ENCODE measurements at regions of chr16 and their contacts with region 1.

Region 1: GRCh38 chr16:30984669-30985400 is at the start of gene HSD3B7:
- DNase-seq: no peak
- ATAC-seq: peak; percentile 95
- H3K4me3 ChIP-seq: no peak within 1 kb of the TSS
- H3K27ac ChIP-seq: no peak within 1 kb of the TSS
- H3K4me1 ChIP-seq: no peaks in the 10 kb centered on the region
- H3K27me3 ChIP-seq: no peaks in the 10 kb centered on the region
- CTCF ChIP-seq: peak; percentile 85 to 97 (median 92)
- EP300 ChIP-seq: no peak
- POLR2A ChIP-seq: peak; percentile 55
- RAD21 ChIP-seq: peak; percentile 89
- polyA plus RNA-seq, gene HSD3B7: 0.18 to 0.40 TPM

Region 2: DNA sequence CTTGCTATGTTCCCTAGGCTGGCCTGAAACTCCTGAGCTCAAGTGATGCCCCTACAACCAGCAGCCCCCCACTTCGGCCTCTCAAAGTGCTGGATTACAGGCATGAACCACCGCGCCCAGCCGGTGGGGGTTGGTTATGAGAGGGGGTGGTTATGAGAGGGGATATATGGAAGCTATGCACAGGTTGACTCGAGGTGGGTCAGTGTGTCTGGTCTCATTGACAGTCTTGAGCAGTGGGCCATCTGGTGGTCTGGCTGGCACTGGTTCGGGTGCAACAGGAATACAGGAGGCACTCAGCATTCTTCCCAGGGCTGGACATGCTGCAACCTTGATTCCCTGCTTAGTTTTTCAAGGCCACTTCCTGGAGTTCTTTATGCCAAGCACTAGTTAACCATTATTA is 31.2 kb after region 1 on chr16:
- CTCF ChIA-PET with region 1: interaction called, 11 read pairs
- POLR2A ChIA-PET with region 1: no interaction called
- RAD21 ChIA-PET with region 1: no interaction called
- SMC1A ChIA-PET with region 1: interaction called, 4 read pairs
- in situ Hi-C with region 1: no loop called
- intact Hi-C with region 1: no loop called
- DNase-seq: no peak
- ATAC-seq: peak; percentile 41; the same call in 2 of the 3 replicates
- H3K4me3 ChIP-seq: no peak overlapping the region
- H3K27ac ChIP-seq: no peak overlapping the region
- H3K4me1 ChIP-seq: no peaks in the 10 kb centered on the region
- H3K27me3 ChIP-seq: peaks cover under 1 to 1% of the 10 kb centered on the region in 2 experiments; a peak in 3 of 4 replicates
- CTCF ChIP-seq: peak in 2 of 3 experiments; percentile 4 to 24; a peak in 3 of 6 replicates
- EP300 ChIP-seq: no peak
- POLR2A ChIP-seq: no peak
- RAD21 ChIP-seq: no peak

Region 3: GRCh38 chr16:31073968-31074813 is 89.4 kb after region 1 on chr16 and contains the starts of genes ZNF646 and ZNF668:
- CTCF ChIA-PET with region 1: interaction called, 13 read pairs
- POLR2A ChIA-PET with region 1: no interaction called
- RAD21 ChIA-PET with region 1: interaction called, 5 read pairs
- SMC1A ChIA-PET with region 1: interaction called, 10 read pairs
- in situ Hi-C with region 1: no loop called
- intact Hi-C with region 1: loop called (anchors 10 kb)
- DNase-seq: peak; percentile 96
- ATAC-seq: peak; percentile 84
- H3K4me3 ChIP-seq: peak within 1 kb of the TSS; percentile 86
- H3K27ac ChIP-seq: peak within 1 kb of the TSS; percentile 89
- H3K4me1 ChIP-seq: peaks cover 3% of the 10 kb centered on the region; the same call in 1 of the 2 replicates
- H3K27me3 ChIP-seq: no peaks in the 10 kb centered on the region
- CTCF ChIP-seq: no peak
- EP300 ChIP-seq: no peak
- POLR2A ChIP-seq: peak; percentile 87
- RAD21 ChIP-seq: no peak
- polyA plus RNA-seq, gene ZNF646: 0.10 to 0.26 TPM
- polyA plus RNA-seq, gene ZNF668: 0.05 TPM in 1 of 2 experiments, not detected in the other

Region 4: DNA sequence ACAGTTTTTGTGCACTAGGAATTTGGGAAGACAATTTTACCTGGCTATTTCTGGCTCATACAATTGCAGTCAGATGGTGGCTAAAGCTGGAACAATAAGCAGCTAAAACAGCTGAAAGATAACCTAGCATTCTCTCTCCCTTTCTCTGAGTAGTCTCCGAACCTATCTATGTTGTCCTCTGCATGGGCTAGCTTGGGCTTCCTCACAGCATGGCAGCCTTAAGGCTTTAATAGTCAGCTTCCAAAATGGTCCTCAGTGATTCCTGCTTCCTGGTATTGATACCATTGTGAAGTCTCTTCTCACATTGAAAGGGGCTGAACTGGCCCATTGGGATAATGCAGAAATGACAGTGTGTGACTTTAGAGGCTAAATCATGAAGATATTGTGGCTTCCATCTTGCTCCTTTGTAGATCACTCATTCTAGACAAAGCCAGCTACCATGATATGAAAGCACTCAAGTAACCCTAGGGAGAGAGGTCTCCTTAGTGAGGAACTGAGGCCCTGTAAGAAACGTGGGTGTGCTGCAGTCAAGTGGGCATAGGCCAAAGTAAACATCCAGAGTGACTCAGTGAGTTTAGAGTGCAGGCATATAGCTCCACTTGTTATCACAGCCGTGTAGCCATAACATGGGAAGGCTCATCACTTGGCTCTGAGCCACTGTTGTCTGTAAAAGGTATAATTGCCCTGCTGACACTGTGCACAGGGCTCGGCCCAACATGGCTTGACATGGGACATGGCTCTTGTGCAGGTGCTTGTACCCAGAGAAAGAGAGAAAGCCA is 115.2 kb after region 1 on chr16:
- CTCF ChIA-PET with region 1: interaction called, 14 read pairs
- POLR2A ChIA-PET with region 1: no interaction called
- RAD21 ChIA-PET with region 1: interaction called, 7 read pairs
- SMC1A ChIA-PET with region 1: interaction called, 5 read pairs
- in situ Hi-C with region 1: loop called (anchors 5 kb)
- intact Hi-C with region 1: loop called (anchors 2 kb)
- DNase-seq: no peak
- ATAC-seq: no peak
- H3K4me3 ChIP-seq: no peak overlapping the region
- H3K27ac ChIP-seq: no peak overlapping the region
- H3K4me1 ChIP-seq: peaks cover 8% of the 10 kb centered on the region
- H3K27me3 ChIP-seq: no peaks in the 10 kb centered on the region
- CTCF ChIP-seq: no peak
- EP300 ChIP-seq: no peak
- POLR2A ChIP-seq: no peak
- RAD21 ChIP-seq: no peak

Region 5: DNA sequence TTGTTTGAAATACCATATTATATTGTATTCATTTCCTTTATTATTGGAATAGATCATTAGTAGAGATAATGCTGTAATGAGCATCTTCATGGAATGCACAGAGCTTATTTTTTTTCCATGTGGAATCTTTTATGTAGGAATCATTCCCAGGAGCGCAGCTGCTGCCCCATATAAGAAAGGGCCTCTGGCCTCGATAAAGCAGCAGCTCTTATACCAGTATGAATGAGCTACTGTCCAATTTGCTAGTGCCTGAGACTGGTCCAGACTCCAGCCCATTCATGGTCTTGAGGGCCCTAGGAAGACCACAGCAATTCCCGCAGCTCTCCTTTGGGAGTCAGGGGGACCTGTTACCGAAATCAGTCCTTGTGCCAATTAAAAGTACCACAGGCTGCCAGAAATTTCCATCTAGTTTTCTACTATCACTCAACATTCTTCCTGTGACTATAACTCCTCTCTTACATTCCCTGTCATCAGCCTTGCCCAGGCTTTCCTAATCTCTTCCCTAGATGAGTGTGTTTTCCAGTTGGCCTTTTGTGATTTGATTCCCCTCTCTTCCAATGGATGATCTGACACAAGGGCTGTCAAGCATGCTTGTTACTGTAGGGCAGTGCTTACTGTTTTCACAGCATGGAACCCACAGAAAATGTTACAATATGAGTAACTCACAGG is 455.8 kb after region 1 on chr16:
- CTCF ChIA-PET with region 1: interaction called, 12 read pairs
- POLR2A ChIA-PET with region 1: interaction called, 3 read pairs
- RAD21 ChIA-PET with region 1: interaction called, 3 read pairs
- SMC1A ChIA-PET with region 1: interaction called, 3 read pairs
- in situ Hi-C with region 1: loop called (anchors 25 kb)
- intact Hi-C with region 1: loop called (anchors 1 kb)
- DNase-seq: no peak
- ATAC-seq: no peak
- H3K4me3 ChIP-seq: no peak overlapping the region
- H3K27ac ChIP-seq: no peak overlapping the region
- H3K4me1 ChIP-seq: no peaks in the 10 kb centered on the region
- H3K27me3 ChIP-seq: no peaks in the 10 kb centered on the region
- CTCF ChIP-seq: no peak
- EP300 ChIP-seq: no peak
- POLR2A ChIP-seq: no peak
- RAD21 ChIP-seq: no peak

Measured in GM12878 (cell line).